Activated CD4-positive, alpha-beta T cell treated with anti-CD3 and anti-CD28 coated beads for 36 hours (primary cell): ENCODE measurements at regions of chr10 and their contacts with region 1.

Region 1: DNA sequence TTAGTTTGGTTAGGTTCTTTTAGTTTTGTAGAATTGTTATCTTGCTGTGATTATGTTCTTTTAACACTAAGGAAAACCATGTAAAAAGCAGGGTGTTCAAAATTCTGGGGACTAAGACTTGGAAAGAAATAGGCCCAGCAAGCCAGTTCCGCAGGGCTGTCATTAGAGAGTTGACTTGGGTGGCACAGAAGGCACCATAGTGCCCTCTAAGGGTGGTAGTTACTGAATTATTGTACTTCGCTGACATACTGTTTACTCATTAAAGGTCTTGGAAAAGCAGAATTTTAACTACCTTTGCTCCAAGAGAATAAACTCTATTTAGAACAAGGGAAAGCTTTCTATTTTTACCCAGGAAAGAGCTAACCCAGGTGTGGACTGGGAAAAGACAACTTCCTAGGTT is 86.5 kb downstream of the OTUD1 start:
- DNase-seq: peak; percentile 26
- ATAC-seq: peak; percentile 47
- H3K4me3 Mint-ChIP-seq: no peak overlapping the region
- H3K27ac Mint-ChIP-seq: no peak overlapping the region
- H3K4me1 Mint-ChIP-seq: peaks cover 3% of the 10 kb centered on the region
- H3K27me3 Mint-ChIP-seq: peaks cover 5% of the 10 kb centered on the region

Region 2: GRCh38 chr10:23314835-23315239 is 210.6 kb before region 1 on chr10:
- CTCF ChIA-PET with region 1: interaction called, 30 read pairs
- POLR2A ChIA-PET with region 1: no interaction called
- intact Hi-C with region 1: loop called (anchors 1 kb)
- DNase-seq: peak; percentile 63
- ATAC-seq: peak; percentile 36
- H3K4me3 Mint-ChIP-seq: no peak overlapping the region
- H3K27ac Mint-ChIP-seq: no peak overlapping the region
- H3K4me1 Mint-ChIP-seq: no peaks in the 10 kb centered on the region
- H3K27me3 Mint-ChIP-seq: no peaks in the 10 kb centered on the region

Region 3: GRCh38 chr10:23448802-23449570 is 76.4 kb before region 1 on chr10:
- CTCF ChIA-PET with region 1: interaction called, 3 read pairs
- POLR2A ChIA-PET with region 1: no interaction called
- intact Hi-C with region 1: loop called (anchors 5 kb)
- DNase-seq: no peak
- ATAC-seq: peak; percentile 83
- H3K4me3 Mint-ChIP-seq: no peak overlapping the region
- H3K27ac Mint-ChIP-seq: peak overlapping the region; percentile 87
- H3K4me1 Mint-ChIP-seq: peaks cover 31% of the 10 kb centered on the region
- H3K27me3 Mint-ChIP-seq: no peaks in the 10 kb centered on the region

Region 4: DNA sequence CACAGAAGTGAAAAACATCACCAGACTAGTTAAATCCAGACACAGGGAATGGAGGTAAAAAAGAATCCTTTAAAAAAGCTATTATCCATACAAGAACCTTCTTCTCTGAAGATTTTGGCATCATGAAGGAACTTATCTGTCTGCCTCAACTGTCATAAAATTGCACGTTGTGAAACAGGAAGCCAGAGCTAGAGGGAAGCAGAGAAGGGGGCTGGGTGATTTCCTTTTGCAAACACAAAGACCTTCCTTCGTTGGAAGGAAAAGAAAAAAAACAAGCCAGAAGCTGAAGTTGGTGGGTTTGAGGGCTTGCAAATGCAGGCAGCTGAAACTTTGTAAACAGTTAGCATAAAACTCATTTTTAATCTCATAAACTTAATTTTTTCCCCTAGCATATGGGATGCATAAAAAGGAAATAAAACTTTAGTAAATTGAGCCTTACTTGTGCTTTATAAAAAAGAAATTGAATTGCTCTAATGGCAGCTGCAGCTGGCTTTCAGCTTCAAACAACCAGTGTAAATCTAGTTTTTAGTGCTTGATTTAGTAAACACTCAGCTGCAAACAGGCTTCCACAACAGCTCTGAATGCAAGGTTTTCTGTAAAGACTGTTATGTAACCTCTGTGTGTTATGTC is 15.1 kb after region 1 on chr10:
- CTCF ChIA-PET with region 1: interaction called, 32 read pairs
- POLR2A ChIA-PET with region 1: no interaction called
- intact Hi-C with region 1: no loop called
- DNase-seq: no peak
- ATAC-seq: no peak
- H3K4me3 Mint-ChIP-seq: no peak overlapping the region
- H3K27ac Mint-ChIP-seq: peak overlapping the region; percentile 48
- H3K4me1 Mint-ChIP-seq: peaks cover 52% of the 10 kb centered on the region
- H3K27me3 Mint-ChIP-seq: no peaks in the 10 kb centered on the region

Region 5: DNA sequence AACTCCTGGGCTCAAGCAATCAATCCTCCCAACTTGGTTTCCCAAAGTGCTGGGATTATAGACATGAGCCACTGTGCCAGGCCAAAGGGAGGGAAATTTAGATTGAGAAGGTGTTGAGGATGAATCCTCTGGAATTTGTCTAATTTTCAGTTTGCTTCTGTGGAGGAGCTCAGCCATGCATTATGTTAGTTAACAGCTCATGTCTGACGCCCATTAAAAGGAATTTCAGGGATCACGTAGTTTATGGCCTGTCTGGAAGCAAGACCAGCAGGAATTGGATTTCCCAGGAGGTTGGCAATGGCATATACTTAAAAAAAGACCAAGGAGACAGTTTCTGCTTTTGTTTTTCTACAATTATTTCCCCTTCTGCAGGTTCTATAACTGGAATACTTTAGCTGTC is 79.2 kb after region 1 on chr10:
- CTCF ChIA-PET with region 1: no interaction called
- POLR2A ChIA-PET with region 1: no interaction called
- intact Hi-C with region 1: no loop called
- DNase-seq: no peak
- ATAC-seq: no peak
- H3K4me3 Mint-ChIP-seq: no peak overlapping the region
- H3K27ac Mint-ChIP-seq: no peak overlapping the region
- H3K4me1 Mint-ChIP-seq: no peaks in the 10 kb centered on the region
- H3K27me3 Mint-ChIP-seq: no peaks in the 10 kb centered on the region